ENCODE measurements at regions of chr13 and their contacts with region 1.

Region 1: GRCh38 chr13:36981156-36981743 is 17.9 kb downstream of the ALG5 start:
- DNase-seq: peak; percentile 45
- ATAC-seq: peak; percentile 56
- H3K4me3 ChIP-seq: no peak overlapping the region
- H3K27ac ChIP-seq: peak overlapping the region; percentile 3
- H3K4me1 ChIP-seq: no peaks in the 10 kb centered on the region
- H3K27me3 ChIP-seq: no peaks in the 10 kb centered on the region
- CTCF ChIP-seq: peak; percentile 63
- EP300 ChIP-seq: no peak
- POLR2A ChIP-seq: no peak
- RAD21 ChIP-seq: peak; percentile 36; the same call in 1 of the 2 replicates

Region 2: DNA sequence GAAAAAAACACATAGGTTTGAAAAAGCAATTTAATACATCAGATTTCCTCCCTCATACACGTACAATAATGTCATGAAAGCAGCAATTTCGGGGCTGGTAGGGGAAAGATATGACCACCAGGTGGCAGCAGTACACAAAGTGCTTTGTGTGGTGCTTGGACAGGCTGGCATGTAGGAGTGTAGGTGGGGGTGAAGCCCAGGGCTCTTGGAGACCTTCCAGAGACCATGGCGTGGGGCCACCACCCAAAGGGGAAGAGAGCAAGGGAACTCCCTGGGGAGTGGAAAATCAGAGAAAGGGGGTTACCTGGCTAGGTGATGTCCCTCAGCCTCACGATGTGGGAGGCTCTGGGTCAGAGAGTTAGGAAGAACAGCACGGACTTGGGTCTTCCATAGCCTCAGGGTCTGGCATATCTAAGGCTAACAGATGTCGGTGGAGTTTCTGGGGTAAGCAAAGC is 560.8 kb before region 1 on chr13:
- CTCF ChIA-PET with region 1: no interaction called
- POLR2A ChIA-PET with region 1: no interaction called
- in situ Hi-C with region 1: no loop called
- intact Hi-C with region 1: loop called (anchors 5 kb)
- DNase-seq: peak; percentile 61
- ATAC-seq: peak; percentile 99
- H3K4me3 ChIP-seq: no peak overlapping the region
- H3K27ac ChIP-seq: no peak overlapping the region
- H3K4me1 ChIP-seq: no peaks in the 10 kb centered on the region
- H3K27me3 ChIP-seq: no peaks in the 10 kb centered on the region
- CTCF ChIP-seq: peak; percentile 85
- EP300 ChIP-seq: no peak
- POLR2A ChIP-seq: no peak
- RAD21 ChIP-seq: 0 out of 2 replicates have a peak, but pooled peaks have one; percentile 29

Region 3: DNA sequence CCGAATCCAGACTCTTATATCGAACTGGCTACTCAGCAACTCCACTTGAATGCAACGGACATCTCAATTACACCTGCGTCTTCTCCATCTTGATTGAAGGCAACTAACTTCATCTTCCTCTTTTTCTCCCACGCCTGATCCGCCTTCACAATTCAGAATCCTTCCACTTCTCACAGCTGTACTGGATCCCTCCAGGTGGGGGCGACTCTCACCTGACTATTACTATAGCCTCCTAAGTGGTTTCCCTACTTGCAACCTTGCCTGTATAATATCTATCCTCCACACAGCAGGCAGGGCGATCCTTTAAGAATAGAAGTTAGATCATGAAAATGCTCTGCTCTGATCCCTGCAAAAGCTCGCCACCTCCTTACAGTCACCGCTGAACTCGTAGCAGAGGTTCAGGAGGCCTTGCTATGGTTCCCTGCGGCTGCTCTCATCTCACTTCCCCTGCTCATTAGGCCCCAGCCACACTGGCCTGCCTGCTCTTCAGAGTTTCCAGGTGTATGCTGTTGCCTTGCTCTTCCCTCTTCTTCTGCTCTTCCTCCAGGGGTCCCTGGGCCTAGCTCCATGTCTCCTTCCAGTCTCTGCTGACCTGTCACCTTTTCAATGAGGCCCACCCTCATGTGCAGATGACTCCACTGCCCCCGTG is 130.3 kb before region 1 on chr13:
- CTCF ChIA-PET with region 1: interaction called, 3 read pairs
- POLR2A ChIA-PET with region 1: no interaction called
- in situ Hi-C with region 1: loop called (anchors 5 kb)
- intact Hi-C with region 1: loop called (anchors 2 kb)
- DNase-seq: peak; percentile 23
- ATAC-seq: peak; percentile 77
- H3K4me3 ChIP-seq: no peak overlapping the region
- H3K27ac ChIP-seq: no peak overlapping the region
- H3K4me1 ChIP-seq: no peaks in the 10 kb centered on the region
- H3K27me3 ChIP-seq: no peaks in the 10 kb centered on the region
- CTCF ChIP-seq: peak; percentile 56
- EP300 ChIP-seq: no peak
- POLR2A ChIP-seq: no peak
- RAD21 ChIP-seq: peak; percentile 30; the same call in 1 of the 2 replicates

Region 4: GRCh38 chr13:36858290-36858689 is 123.0 kb before region 1 on chr13:
- CTCF ChIA-PET with region 1: interaction called, 39 read pairs
- POLR2A ChIA-PET with region 1: interaction called, 3 read pairs
- in situ Hi-C with region 1: loop called (anchors 5 kb)
- intact Hi-C with region 1: loop called (anchors 1 kb)
- DNase-seq: peak; percentile 69
- ATAC-seq: peak; percentile 95
- H3K4me3 ChIP-seq: no peak overlapping the region
- H3K27ac ChIP-seq: no peak overlapping the region
- H3K4me1 ChIP-seq: peaks cover 11% of the 10 kb centered on the region
- H3K27me3 ChIP-seq: no peaks in the 10 kb centered on the region
- CTCF ChIP-seq: peak; percentile 82
- EP300 ChIP-seq: no peak
- POLR2A ChIP-seq: no peak
- RAD21 ChIP-seq: peak; percentile 78

Measured in HepG2 (cell line).